ENCODE measurements at regions of chr12 and their contacts with region 1.

Region 1: DNA sequence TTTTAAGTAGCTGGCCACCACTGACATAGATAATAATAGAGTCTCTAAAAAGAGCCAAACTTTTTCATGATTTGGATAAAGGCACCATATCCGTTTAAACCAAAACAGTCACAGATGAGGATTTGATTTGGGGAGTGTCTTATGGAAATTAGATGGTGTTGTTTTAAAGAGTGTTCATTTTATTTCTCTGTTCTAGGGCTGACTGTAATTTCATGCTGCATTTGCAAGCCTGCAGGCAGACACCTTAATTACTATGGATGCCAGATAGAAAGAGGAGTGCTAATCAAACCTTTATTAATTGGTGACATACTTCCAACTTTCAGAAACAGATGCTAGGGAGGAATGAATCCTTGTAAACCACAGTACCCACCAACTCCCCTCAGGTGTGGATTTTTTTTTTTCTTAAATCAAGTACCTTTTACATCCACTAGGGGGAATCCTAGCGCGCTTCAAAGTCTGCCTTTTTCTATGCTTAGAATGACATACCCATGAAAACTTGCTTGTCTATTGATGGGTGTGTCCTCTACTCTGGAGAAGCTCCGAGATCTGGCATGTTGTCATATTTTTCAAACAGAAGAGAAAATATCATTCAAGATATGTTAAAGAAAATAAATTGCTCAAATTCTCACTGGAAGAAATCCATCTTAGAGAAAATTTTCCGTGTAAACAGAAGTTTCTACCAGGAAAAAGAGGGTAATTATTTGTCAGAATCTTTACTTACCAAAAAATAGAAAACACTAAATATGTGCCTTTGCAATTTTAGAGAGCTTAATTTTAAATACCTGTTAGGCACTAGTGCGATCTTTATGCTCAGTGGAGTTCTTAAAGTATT is 14.2 kb upstream of the PLXNC1 start:
- DNase-seq: no peak
- ATAC-seq: peak; percentile 92
- H3K4me3 ChIP-seq: no peak overlapping the region
- H3K4me1 ChIP-seq: no peaks in the 10 kb centered on the region
- CTCF ChIP-seq: peak; percentile 52

Region 2: GRCh38 chr12:94435511-94435927 is 301.3 kb after region 1 on chr12:
- intact Hi-C with region 1: loop called in 1 of 2 experiments (anchors 10 kb)
- DNase-seq: no peak
- ATAC-seq: no peak
- H3K4me3 ChIP-seq: no peak overlapping the region
- H3K4me1 ChIP-seq: no peaks in the 10 kb centered on the region
- CTCF ChIP-seq: no peak